Activated CD8-positive, alpha-beta T cell treated with anti-CD3 and anti-CD28 coated beads for 36 hours (primary cell): ENCODE measurements at regions of chr13 and their contacts with region 1.

Region 1: GRCh38 chr13:45310341-45311125 is 30.4 kb downstream of the TPT1 start:
- DNase-seq: no peak
- ATAC-seq: peak; percentile 10
- H3K4me3 Mint-ChIP-seq: peak overlapping the region; percentile 76
- H3K27ac Mint-ChIP-seq: no peak overlapping the region
- H3K4me1 Mint-ChIP-seq: peaks cover 19% of the 10 kb centered on the region
- H3K27me3 Mint-ChIP-seq: peaks cover 17% of the 10 kb centered on the region
- CTCF ChIP-seq: no peak

Region 2: GRCh38 chr13:45040622-45041021 is 269.9 kb before region 1 on chr13:
- CTCF ChIA-PET with region 1: interaction called, 22 read pairs
- POLR2A ChIA-PET with region 1: no interaction called
- intact Hi-C with region 1: no loop called
- DNase-seq: no peak
- ATAC-seq: no peak
- H3K4me3 Mint-ChIP-seq: no peak overlapping the region
- H3K27ac Mint-ChIP-seq: no peak overlapping the region
- H3K4me1 Mint-ChIP-seq: no peaks in the 10 kb centered on the region
- H3K27me3 Mint-ChIP-seq: peaks cover 8% of the 10 kb centered on the region
- CTCF ChIP-seq: no peak

Region 3: DNA sequence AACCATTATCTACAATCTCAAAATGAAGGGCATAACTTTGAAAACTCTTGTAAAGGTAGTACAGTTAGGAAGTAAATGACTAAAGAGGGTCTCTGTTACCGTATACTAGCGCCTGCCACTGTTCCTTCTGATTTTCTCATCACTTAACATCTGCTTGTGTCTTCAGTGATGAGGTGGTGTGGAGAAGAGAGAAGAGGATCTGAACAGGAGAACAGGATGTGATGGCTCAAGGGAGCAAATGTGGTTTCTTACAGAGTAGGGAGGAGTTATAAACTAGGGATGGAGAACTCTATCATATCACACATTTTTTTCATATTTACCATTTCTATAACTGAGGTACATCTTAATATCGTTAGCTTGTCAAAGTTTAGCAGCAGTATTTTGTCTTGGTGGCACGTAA is 110.8 kb before region 1 on chr13:
- CTCF ChIA-PET with region 1: no interaction called
- POLR2A ChIA-PET with region 1: no interaction called
- intact Hi-C with region 1: no loop called
- DNase-seq: no peak
- ATAC-seq: no peak
- H3K4me3 Mint-ChIP-seq: no peak overlapping the region
- H3K27ac Mint-ChIP-seq: no peak overlapping the region
- H3K4me1 Mint-ChIP-seq: peaks cover 20% of the 10 kb centered on the region
- H3K27me3 Mint-ChIP-seq: no peaks in the 10 kb centered on the region
- CTCF ChIP-seq: no peak

Region 4: GRCh38 chr13:45297456-45298205 is 12.9 kb before region 1 on chr13:
- CTCF ChIA-PET with region 1: interaction called, 32 read pairs
- POLR2A ChIA-PET with region 1: interaction called, 3 read pairs
- intact Hi-C with region 1: no loop called
- DNase-seq: peak; percentile 16
- ATAC-seq: peak; percentile 79
- H3K4me3 Mint-ChIP-seq: no peak overlapping the region
- H3K27ac Mint-ChIP-seq: peak overlapping the region; percentile 53
- H3K4me1 Mint-ChIP-seq: peaks cover 34% of the 10 kb centered on the region
- H3K27me3 Mint-ChIP-seq: peaks cover 2% of the 10 kb centered on the region
- CTCF ChIP-seq: no peak

Region 5: GRCh38 chr13:45325806-45326205 is 15.3 kb after region 1 on chr13:
- CTCF ChIA-PET with region 1: interaction called, 15 read pairs
- POLR2A ChIA-PET with region 1: no interaction called
- intact Hi-C with region 1: no loop called
- DNase-seq: no peak
- ATAC-seq: no peak
- H3K4me3 Mint-ChIP-seq: no peak overlapping the region
- H3K27ac Mint-ChIP-seq: no peak overlapping the region
- H3K4me1 Mint-ChIP-seq: peaks cover 30% of the 10 kb centered on the region
- H3K27me3 Mint-ChIP-seq: no peaks in the 10 kb centered on the region
- CTCF ChIP-seq: no peak

Region 6: GRCh38 chr13:45361596-45362206 is 51.2 kb after region 1 on chr13:
- CTCF ChIA-PET with region 1: no interaction called
- POLR2A ChIA-PET with region 1: no interaction called
- intact Hi-C with region 1: no loop called
- DNase-seq: no peak
- ATAC-seq: no peak
- H3K4me3 Mint-ChIP-seq: no peak overlapping the region
- H3K27ac Mint-ChIP-seq: peak overlapping the region; percentile 34
- H3K4me1 Mint-ChIP-seq: peaks cover 49% of the 10 kb centered on the region
- H3K27me3 Mint-ChIP-seq: no peaks in the 10 kb centered on the region
- CTCF ChIP-seq: no peak

Region 7: GRCh38 chr13:45548281-45548680 is 237.7 kb after region 1 on chr13:
- CTCF ChIA-PET with region 1: no interaction called
- POLR2A ChIA-PET with region 1: no interaction called
- intact Hi-C with region 1: no loop called
- DNase-seq: no peak
- ATAC-seq: no peak
- H3K4me3 Mint-ChIP-seq: no peak overlapping the region
- H3K27ac Mint-ChIP-seq: no peak overlapping the region
- H3K4me1 Mint-ChIP-seq: no peaks in the 10 kb centered on the region
- H3K27me3 Mint-ChIP-seq: no peaks in the 10 kb centered on the region
- CTCF ChIP-seq: no peak